Breast epithelium (tissue), 4 donors: ENCODE measurements at regions of chr9 and their contacts with region 1.

Region 1: GRCh38 chr9:17462869-17463464 is 115.9 kb upstream of the SH3GL2 start:
- DNase-seq: no peak
- H3K4me3 ChIP-seq: no peak overlapping the region
- H3K27ac ChIP-seq: no peak overlapping the region
- H3K4me1 ChIP-seq: no peaks in the 10 kb centered on the region
- H3K27me3 ChIP-seq: no peaks in the 10 kb centered on the region
- CTCF ChIP-seq: peak; percentile 16 to 80 (median 47)
- POLR2A ChIP-seq: no peak

Region 2: DNA sequence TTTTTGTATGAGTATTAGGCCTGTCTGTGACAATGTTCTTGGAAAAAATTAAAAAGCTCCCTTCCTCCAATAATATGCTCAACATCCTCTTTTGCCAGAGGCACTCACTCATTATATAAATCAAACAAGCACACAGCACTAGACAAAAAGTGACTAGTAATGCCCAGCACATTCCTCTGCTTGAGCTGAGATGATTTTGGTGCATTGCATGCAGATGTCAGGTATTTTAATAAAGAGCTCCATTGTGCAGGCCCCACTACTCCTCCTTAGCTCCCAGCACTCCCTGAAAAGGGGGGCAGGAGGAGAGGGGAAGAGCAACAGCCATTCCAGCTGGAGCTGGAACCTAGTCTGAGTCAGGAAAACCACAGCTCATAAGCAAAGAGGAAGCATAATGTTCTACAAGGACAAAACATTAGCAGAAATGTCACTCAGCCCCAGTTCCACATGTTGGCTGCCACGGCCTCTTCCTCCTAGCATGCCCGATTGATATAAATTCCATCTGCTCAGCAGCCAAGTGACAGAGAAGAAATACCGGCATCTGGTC is 941.0 kb before region 1 on chr9:
- intact Hi-C with region 1: no loop called
- DNase-seq: peak in 1 of 2 donors; percentile 38
- H3K4me3 ChIP-seq: peak overlapping the region in 1 of 3 donors; percentile 39
- H3K27ac ChIP-seq: peak overlapping the region in 1 of 2 donors; percentile 76
- H3K4me1 ChIP-seq: peaks cover 0 to 3% of the 10 kb centered on the region in 2 donors
- H3K27me3 ChIP-seq: no peaks in the 10 kb centered on the region
- CTCF ChIP-seq: no peak
- POLR2A ChIP-seq: no peak

Region 3: GRCh38 chr9:17272536-17272935 is 190.4 kb before region 1 on chr9:
- intact Hi-C with region 1: no loop called
- DNase-seq: no peak
- H3K4me3 ChIP-seq: no peak overlapping the region
- H3K27ac ChIP-seq: no peak overlapping the region
- H3K4me1 ChIP-seq: no peaks in the 10 kb centered on the region
- H3K27me3 ChIP-seq: no peaks in the 10 kb centered on the region
- CTCF ChIP-seq: no peak
- POLR2A ChIP-seq: no peak

Region 4: DNA sequence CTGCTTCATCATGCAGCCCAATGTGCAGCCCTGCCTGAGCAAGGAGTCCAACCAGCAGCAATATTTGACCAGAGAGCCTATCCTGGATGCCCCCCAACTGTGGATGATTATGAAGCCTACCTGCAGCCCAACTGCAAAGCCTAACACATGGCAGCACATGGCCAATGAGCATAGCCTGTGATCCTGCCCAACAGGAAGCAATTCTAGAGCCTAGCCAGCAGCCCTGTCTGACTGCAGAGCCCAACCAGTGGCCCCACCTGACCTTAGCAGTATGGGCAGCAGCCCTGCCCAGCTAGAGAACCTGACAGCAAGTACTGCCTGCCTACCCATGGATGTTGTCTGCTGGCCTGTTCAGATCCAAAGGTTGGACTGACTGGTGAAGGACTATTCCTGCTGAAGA is 18.6 kb after region 1 on chr9:
- intact Hi-C with region 1: no loop called
- DNase-seq: no peak
- H3K4me3 ChIP-seq: no peak overlapping the region
- H3K27ac ChIP-seq: no peak overlapping the region
- H3K4me1 ChIP-seq: no peaks in the 10 kb centered on the region
- H3K27me3 ChIP-seq: no peaks in the 10 kb centered on the region
- CTCF ChIP-seq: no peak
- POLR2A ChIP-seq: no peak

Region 5: DNA sequence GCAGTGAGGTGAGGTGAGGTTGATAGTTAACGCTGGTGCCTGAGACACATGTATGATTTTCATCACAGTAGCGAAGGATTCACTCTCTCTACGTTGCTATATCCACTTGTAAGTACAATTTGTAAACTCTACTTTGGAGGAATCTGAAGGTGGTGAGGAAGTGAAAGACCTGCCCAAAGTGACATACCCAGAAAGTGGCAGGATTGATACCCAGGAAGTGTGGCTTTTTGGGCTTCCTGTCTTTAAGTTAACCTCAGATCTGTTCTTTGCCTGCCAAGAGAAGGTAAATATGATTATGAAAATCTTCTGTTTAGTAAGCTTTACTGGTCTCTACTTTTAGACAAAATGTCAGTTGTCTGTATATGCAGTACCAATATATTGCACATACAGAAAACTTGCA is 259.0 kb after region 1 on chr9:
- intact Hi-C with region 1: loop called (anchors 5 kb)
- DNase-seq: no peak
- H3K4me3 ChIP-seq: no peak overlapping the region
- H3K27ac ChIP-seq: no peak overlapping the region
- H3K4me1 ChIP-seq: no peaks in the 10 kb centered on the region
- H3K27me3 ChIP-seq: no peaks in the 10 kb centered on the region
- CTCF ChIP-seq: no peak
- POLR2A ChIP-seq: no peak